B cell (primary cell): ENCODE measurements at regions of chr6 and their contacts with region 1.

Region 1: DNA sequence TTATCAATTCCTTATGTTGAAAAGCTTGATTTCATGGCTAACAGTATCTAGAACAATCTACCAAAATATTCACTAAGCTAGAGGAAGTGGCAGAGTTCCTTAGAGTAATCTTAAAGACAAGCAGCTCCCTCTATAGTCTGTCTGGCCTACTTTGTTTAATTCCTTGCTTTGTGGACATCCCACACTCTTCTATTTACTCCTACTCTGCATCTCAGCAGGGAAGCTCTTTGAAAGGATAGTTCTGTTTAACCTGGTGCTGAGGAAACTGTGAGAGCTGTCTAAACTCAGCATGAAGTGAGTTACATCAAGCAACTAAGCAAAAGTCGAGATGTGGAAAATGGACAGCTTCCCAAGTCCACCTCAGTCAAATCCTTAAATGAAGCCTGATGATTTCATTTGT is 4.3 kb downstream of the REV3L start:
- DNase-seq: peak; percentile 72
- ATAC-seq: no peak
- H3K4me3 ChIP-seq: no peak overlapping the region
- H3K4me3 Mint-ChIP-seq: no peak overlapping the region
- H3K27ac ChIP-seq: peak overlapping the region in 1 of 2 donors; percentile 70
- H3K27ac Mint-ChIP-seq: peak overlapping the region; percentile 60
- H3K4me1 ChIP-seq: peaks cover 20 to 25% of the 10 kb centered on the region in 2 donors
- H3K4me1 Mint-ChIP-seq: peaks cover 34% of the 10 kb centered on the region
- H3K27me3 ChIP-seq: no peaks in the 10 kb centered on the region
- H3K27me3 Mint-ChIP-seq: no peaks in the 10 kb centered on the region
- CTCF ChIP-seq: peak; percentile 72

Region 2: GRCh38 chr6:111057074-111057752 is 421.5 kb before region 1 on chr6:
- CTCF ChIA-PET with region 1: interaction called, 10 read pairs
- POLR2A ChIA-PET with region 1: no interaction called
- intact Hi-C with region 1: loop called (anchors 1 kb)
- DNase-seq: peak; percentile 42
- ATAC-seq: peak; percentile 45
- H3K4me3 ChIP-seq: no peak overlapping the region
- H3K4me3 Mint-ChIP-seq: no peak overlapping the region
- H3K27ac ChIP-seq: no peak overlapping the region
- H3K27ac Mint-ChIP-seq: no peak overlapping the region
- H3K4me1 ChIP-seq: no peaks in the 10 kb centered on the region
- H3K4me1 Mint-ChIP-seq: no peaks in the 10 kb centered on the region
- H3K27me3 ChIP-seq: no peaks in the 10 kb centered on the region
- H3K27me3 Mint-ChIP-seq: peaks cover 10% of the 10 kb centered on the region
- CTCF ChIP-seq: peak; percentile 75

Region 3: GRCh38 chr6:111259089-111259831 is 219.5 kb before region 1 on chr6:
- CTCF ChIA-PET with region 1: interaction called, 119 read pairs
- POLR2A ChIA-PET with region 1: interaction called, 26 read pairs
- intact Hi-C with region 1: loop called (anchors 1 kb)
- DNase-seq: peak; percentile 100
- ATAC-seq: peak; percentile 96
- H3K4me3 ChIP-seq: peak overlapping the region; percentile 63 to 91 (median 82)
- H3K4me3 Mint-ChIP-seq: peak overlapping the region; percentile 87
- H3K27ac ChIP-seq: peak overlapping the region; percentile 95
- H3K27ac Mint-ChIP-seq: peak overlapping the region; percentile 98
- H3K4me1 ChIP-seq: peaks cover 17 to 26% of the 10 kb centered on the region in 2 donors
- H3K4me1 Mint-ChIP-seq: peaks cover 25% of the 10 kb centered on the region
- H3K27me3 ChIP-seq: no peaks in the 10 kb centered on the region
- H3K27me3 Mint-ChIP-seq: peaks cover under 1% of the 10 kb centered on the region
- CTCF ChIP-seq: peak; percentile 96

Region 4: DNA sequence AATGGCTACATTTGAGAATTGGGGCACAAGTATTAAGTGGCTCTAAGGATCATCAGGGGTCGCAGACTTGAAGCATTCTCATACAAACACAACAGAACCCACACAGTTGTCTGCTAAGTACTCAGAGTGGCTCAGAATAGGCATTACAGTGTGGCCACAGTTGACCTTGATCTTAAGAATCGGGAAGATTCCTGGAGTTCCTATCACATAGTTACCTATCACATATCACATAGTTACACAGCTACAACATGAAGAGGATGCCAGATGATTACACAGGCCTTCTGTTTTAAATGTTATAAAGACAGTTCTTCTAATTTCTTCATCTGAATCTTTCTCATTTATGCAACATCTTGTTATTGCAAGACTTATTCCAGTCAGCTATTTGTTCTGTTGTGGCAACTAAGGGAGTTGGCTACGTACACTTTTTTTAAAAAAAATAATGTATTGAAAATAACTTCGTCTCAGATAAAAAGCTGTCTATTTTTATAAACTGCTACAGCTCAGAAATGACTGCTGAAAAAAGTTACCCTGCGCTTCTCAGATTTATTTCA is 124.8 kb before region 1 on chr6:
- CTCF ChIA-PET with region 1: interaction called, 18 read pairs
- POLR2A ChIA-PET with region 1: interaction called, 3 read pairs
- intact Hi-C with region 1: no loop called
- DNase-seq: no peak
- ATAC-seq: no peak
- H3K4me3 ChIP-seq: no peak overlapping the region
- H3K4me3 Mint-ChIP-seq: no peak overlapping the region
- H3K27ac ChIP-seq: no peak overlapping the region
- H3K27ac Mint-ChIP-seq: no peak overlapping the region
- H3K4me1 ChIP-seq: no peaks in the 10 kb centered on the region
- H3K4me1 Mint-ChIP-seq: no peaks in the 10 kb centered on the region
- H3K27me3 ChIP-seq: no peaks in the 10 kb centered on the region
- H3K27me3 Mint-ChIP-seq: no peaks in the 10 kb centered on the region
- CTCF ChIP-seq: no peak

Region 5: GRCh38 chr6:111406200-111406721 is 72.5 kb before region 1 on chr6:
- CTCF ChIA-PET with region 1: interaction called, 22 read pairs
- POLR2A ChIA-PET with region 1: interaction called, 6 read pairs
- intact Hi-C with region 1: loop called (anchors 1 kb)
- DNase-seq: peak; percentile 93
- ATAC-seq: peak; percentile 97
- H3K4me3 ChIP-seq: no peak overlapping the region
- H3K4me3 Mint-ChIP-seq: peak overlapping the region; percentile 64
- H3K27ac ChIP-seq: peak overlapping the region; percentile 73 to 94
- H3K27ac Mint-ChIP-seq: peak overlapping the region; percentile 85
- H3K4me1 ChIP-seq: peaks cover 15 to 17% of the 10 kb centered on the region in 2 donors
- H3K4me1 Mint-ChIP-seq: peaks cover 27% of the 10 kb centered on the region
- H3K27me3 ChIP-seq: no peaks in the 10 kb centered on the region
- H3K27me3 Mint-ChIP-seq: no peaks in the 10 kb centered on the region
- CTCF ChIP-seq: no peak

Region 6: GRCh38 chr6:111462770-111463391 is 15.9 kb before region 1 on chr6:
- CTCF ChIA-PET with region 1: interaction called, 11 read pairs
- POLR2A ChIA-PET with region 1: no interaction called
- intact Hi-C with region 1: no loop called
- DNase-seq: no peak
- ATAC-seq: no peak
- H3K4me3 ChIP-seq: no peak overlapping the region
- H3K4me3 Mint-ChIP-seq: no peak overlapping the region
- H3K27ac ChIP-seq: peak overlapping the region in 1 of 2 donors; percentile 16
- H3K27ac Mint-ChIP-seq: peak overlapping the region; percentile 13
- H3K4me1 ChIP-seq: peaks cover 0 to 7% of the 10 kb centered on the region in 2 donors
- H3K4me1 Mint-ChIP-seq: peaks cover 25% of the 10 kb centered on the region
- H3K27me3 ChIP-seq: no peaks in the 10 kb centered on the region
- H3K27me3 Mint-ChIP-seq: no peaks in the 10 kb centered on the region
- CTCF ChIP-seq: no peak